ENCODE measurements at regions of chr4 and their contacts with region 1.

Region 1: GRCh38 chr4:57163530-57164459 is 53.6 kb upstream of the IGFBP7 start:
- DNase-seq: peak; percentile 60
- H3K4me3 ChIP-seq: peak overlapping the region; percentile 82
- H3K27ac ChIP-seq: no peak overlapping the region
- H3K27me3 ChIP-seq: peaks cover 9% of the 10 kb centered on the region
- CTCF ChIP-seq: peak; percentile 83

Region 2: DNA sequence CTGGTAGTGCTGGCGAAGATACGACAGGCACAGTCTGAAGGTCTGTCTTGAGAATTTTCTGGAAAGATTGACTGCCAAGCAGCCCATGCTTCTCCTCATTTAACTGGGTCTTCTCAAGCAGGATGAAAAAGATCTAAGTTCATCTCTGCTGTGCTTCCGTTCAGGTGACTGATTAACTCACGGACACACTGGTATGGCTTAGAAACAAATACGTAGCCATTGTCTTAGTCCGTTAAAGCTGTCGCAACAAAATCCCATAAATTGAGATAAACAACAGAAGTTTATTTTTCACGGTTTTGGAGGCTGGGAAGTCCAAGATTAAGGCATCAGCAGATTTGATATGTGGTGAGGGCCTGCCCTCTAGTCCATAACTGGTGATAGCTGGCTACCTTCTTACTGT is 381.8 kb before region 1 on chr4:
- CTCF ChIA-PET with region 1: no interaction called
- POLR2A ChIA-PET with region 1: no interaction called
- DNase-seq: no peak
- H3K4me3 ChIP-seq: no peak overlapping the region
- H3K27ac ChIP-seq: no peak overlapping the region
- H3K27me3 ChIP-seq: peaks cover 12% of the 10 kb centered on the region
- CTCF ChIP-seq: no peak

Region 3: DNA sequence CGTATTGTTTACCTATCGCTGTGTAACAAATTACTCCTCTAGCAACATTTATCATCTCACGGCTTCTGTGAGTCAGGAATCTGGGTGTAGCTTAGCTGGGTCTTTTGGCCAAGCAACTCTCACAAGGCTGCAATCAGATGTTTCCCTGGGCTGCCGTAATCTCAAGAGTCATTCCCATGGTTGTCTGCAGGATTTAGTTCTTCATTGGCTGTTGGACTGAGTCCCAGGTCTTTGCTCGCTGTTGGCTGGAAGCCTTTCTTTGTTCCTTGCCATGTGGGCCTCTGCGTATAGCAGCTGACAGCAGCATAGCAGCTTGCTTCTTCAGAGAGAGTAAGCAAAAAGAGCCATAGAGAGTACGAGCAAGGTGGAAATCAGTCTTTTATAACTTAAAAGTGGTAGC is 168.3 kb before region 1 on chr4:
- CTCF ChIA-PET with region 1: interaction called, 11 read pairs
- POLR2A ChIA-PET with region 1: no interaction called
- DNase-seq: peak; percentile 87
- H3K4me3 ChIP-seq: no peak overlapping the region
- H3K27ac ChIP-seq: peak overlapping the region; percentile 71
- H3K27me3 ChIP-seq: no peaks in the 10 kb centered on the region
- CTCF ChIP-seq: no peak

Region 4: GRCh38 chr4:57048590-57049304 is 115.0 kb before region 1 on chr4:
- CTCF ChIA-PET with region 1: interaction called, 16 read pairs
- POLR2A ChIA-PET with region 1: interaction called, 3 read pairs
- DNase-seq: no peak
- H3K4me3 ChIP-seq: no peak overlapping the region
- H3K27ac ChIP-seq: no peak overlapping the region
- H3K27me3 ChIP-seq: no peaks in the 10 kb centered on the region
- CTCF ChIP-seq: no peak

Region 5: GRCh38 chr4:57094832-57095223 is 69.0 kb before region 1 on chr4:
- CTCF ChIA-PET with region 1: interaction called, 13 read pairs
- POLR2A ChIA-PET with region 1: no interaction called
- DNase-seq: no peak
- H3K4me3 ChIP-seq: no peak overlapping the region
- H3K27ac ChIP-seq: no peak overlapping the region
- H3K27me3 ChIP-seq: no peaks in the 10 kb centered on the region
- CTCF ChIP-seq: no peak

Region 6: GRCh38 chr4:57131849-57132742 is 31.7 kb before region 1 on chr4:
- CTCF ChIA-PET with region 1: interaction called, 35 read pairs
- POLR2A ChIA-PET with region 1: no interaction called
- DNase-seq: no peak
- H3K4me3 ChIP-seq: no peak overlapping the region
- H3K27ac ChIP-seq: no peak overlapping the region
- H3K27me3 ChIP-seq: no peaks in the 10 kb centered on the region
- CTCF ChIP-seq: no peak

Region 7: DNA sequence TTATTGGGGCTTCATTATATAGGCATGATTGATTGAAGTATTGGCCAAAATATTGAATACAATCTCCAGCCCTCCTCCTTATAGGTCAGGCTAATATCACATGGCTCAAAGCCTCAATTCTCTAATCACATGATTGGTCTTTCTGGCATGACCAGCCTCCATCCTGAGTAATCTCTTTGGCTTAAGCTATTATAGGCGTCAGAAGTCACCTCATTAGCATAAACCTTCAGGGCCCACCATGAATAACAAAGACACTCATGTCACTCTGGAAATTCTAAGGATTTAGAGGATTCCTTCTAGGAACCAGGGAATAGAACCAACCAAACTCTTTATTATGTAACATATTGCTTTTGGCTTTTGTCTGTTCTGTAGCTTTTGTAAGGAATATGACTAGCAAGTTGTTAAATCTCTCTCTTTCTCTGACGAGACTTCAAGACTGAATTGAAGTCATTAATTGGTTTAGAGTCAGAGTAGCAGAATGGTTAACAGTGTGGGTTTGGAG is 55.6 kb after region 1 on chr4:
- CTCF ChIA-PET with region 1: interaction called, 10 read pairs
- POLR2A ChIA-PET with region 1: no interaction called
- DNase-seq: no peak
- H3K4me3 ChIP-seq: no peak overlapping the region
- H3K27ac ChIP-seq: no peak overlapping the region
- H3K27me3 ChIP-seq: peaks cover 2% of the 10 kb centered on the region
- CTCF ChIP-seq: no peak

Region 8: DNA sequence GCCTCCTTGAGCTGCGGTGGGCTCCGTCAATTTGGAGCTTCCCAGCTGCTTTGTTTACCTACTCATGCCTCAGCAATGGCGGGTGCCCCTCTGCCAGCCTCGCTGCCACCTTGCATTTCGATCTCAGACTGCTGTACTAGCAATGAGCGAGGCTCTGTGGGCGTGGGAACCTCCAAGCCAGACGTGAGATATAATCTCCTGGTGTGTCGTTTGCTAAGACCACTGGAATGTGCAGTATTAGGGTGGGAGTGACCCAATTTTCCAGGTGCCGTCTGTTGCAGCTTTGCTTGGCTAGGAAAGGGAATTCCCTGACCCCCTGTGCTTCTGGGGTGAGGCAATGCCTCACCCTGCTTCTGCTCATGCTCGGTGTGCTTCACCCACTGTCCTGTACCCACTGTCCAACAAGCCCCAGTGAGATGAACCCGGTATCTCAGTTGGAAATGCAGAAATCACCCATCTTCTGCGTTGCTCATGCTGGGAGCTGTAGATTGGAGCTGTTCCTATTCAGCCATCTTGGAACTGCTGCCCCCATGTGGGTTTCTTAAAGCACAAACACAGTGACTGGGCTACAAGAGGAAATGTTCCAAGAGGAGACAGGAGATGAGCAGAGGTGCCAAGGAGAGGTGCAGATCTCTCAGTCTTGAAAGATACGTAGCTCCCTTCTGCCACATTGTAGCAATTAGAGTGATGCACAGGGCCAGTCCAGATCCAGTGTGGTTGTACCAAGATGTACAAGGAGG is 139.4 kb after region 1 on chr4:
- CTCF ChIA-PET with region 1: no interaction called
- POLR2A ChIA-PET with region 1: no interaction called
- DNase-seq: no peak
- H3K4me3 ChIP-seq: no peak overlapping the region
- H3K27ac ChIP-seq: no peak overlapping the region
- H3K27me3 ChIP-seq: no peaks in the 10 kb centered on the region
- CTCF ChIP-seq: no peak

Measured in AG04450 (cell line).